ENCODE measurements at regions of chr1 and their contacts with region 1.

Region 1: GRCh38 chr1:15603050-15603965 is 13.9 kb upstream of the DDI2 start:
- DNase-seq: peak; percentile 95

Region 2: GRCh38 chr1:15617175-15617880 is 14.0 kb after region 1 on chr1 and contains the start of gene DDI2:
- CTCF ChIA-PET with region 1: interaction called, 4 read pairs
- POLR2A ChIA-PET with region 1: interaction called, 61 read pairs
- DNase-seq: peak; percentile 92

Measured in HEK293T (cell line).